Right cardiac atrium (tissue), 5 donors: ENCODE measurements at regions of chr17 and their contacts with region 1.

Region 1: DNA sequence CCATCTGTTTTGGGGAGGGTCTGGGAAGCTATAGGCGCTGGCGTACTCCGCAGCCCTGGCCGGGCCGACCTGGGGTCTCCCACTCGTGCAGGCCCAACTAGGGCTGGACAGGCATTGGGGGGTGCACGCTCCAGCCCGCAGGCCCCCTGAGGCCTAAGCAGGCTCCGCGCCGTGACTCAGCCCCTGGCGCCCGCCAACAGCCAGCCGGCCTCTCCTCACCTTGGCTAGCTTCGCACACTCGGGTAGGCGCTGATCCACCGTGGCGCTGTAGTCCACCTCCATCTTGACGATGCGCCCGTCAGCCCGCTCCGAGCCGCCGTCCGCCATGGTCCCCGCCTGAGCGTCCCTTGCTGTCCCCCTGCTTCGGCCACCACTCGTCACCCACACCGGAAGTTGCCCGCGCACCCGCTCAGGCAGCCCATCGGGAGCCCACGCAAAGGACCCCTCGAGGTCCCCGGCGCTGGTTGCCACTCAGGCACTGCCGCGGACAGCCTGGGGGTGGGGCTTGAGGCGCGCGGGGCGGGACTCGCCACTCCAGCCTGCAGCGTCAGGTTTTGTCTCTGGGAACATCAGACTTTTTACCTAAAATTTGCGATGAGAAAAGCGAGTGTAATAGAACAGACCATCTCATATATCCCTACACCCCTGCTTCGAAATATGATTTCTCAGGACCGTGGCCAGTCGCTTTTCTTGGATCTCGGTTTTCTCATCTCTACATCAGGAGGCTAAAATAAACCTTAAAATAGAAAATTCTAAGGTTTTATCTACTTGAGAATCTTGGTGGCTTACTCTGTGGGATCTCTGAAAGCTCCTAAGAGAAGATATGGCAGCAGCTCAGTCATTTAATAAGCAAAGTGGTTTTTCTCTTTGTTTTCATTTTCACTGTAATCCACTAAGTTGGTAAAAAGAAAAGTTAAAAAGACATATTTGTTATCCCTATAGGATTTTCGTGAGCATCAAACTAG is at the start of gene PSMD12:
- DNase-seq: peak; percentile 94 to 98 (median 98)
- ATAC-seq: peak; percentile 95 to 98
- H3K4me3 ChIP-seq: peak within 1 kb of the TSS; percentile 81
- H3K27ac ChIP-seq: peak within 1 kb of the TSS; percentile 79
- H3K4me1 ChIP-seq: peaks cover 2% of the 10 kb centered on the region
- H3K27me3 ChIP-seq: no peaks in the 10 kb centered on the region
- total RNA-seq, gene PSMD12: 47.2 to 59.5 (median 51.4) TPM

Region 2: DNA sequence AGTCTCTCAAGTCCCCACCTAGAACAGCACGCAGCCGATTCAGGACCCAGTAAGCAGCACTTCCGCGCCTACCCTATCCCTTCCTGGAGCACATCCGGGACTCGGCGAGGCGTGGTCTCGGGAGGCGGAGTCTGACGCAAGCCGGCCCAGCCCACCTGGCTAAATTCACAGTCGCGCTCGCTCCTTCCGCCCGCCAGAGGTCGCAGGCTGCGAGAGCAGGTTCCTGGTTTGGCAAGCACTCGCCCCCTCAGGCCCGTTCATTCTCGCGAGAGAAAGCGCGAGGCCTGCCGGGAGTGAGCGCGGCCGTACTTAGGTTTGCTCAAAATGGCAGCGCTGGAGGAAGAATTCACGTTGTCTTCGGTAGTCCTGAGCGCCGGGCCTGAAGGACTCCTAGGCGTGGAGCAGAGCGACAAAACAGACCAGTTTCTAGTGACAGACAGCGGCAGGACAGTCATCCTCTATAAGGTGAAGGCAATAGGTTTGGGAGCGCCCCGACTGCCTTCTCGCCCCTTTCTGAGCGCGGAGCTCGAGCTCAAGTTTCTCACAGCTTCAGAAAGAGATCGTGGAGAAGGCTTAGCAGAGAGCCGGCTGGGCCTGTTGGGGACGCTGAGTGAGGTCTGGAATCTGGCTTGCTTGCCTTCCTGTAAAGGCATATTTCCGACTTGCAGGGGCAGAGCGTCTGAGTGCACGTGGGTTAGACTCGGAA is 351.3 kb after region 1 on chr17 and contains the start of gene NOL11:
- intact Hi-C with region 1: loop called in 1 of 4 experiments (anchors 10 kb)
- DNase-seq: peak; percentile 98 to 100 (median 99)
- ATAC-seq: peak; percentile 99 to 100
- H3K4me3 ChIP-seq: peak within 1 kb of the TSS; percentile 92
- H3K27ac ChIP-seq: peak within 1 kb of the TSS; percentile 91
- H3K4me1 ChIP-seq: peaks cover 3% of the 10 kb centered on the region
- H3K27me3 ChIP-seq: no peaks in the 10 kb centered on the region
- total RNA-seq, gene NOL11: 22.0 to 30.2 (median 26.9) TPM